Activated CD4-positive, alpha-beta memory T cell treated with anti-CD3 and anti-CD28 coated beads for 36 hours (primary cell): ENCODE measurements at regions of chr17 and their contacts with region 1.

Region 1: DNA sequence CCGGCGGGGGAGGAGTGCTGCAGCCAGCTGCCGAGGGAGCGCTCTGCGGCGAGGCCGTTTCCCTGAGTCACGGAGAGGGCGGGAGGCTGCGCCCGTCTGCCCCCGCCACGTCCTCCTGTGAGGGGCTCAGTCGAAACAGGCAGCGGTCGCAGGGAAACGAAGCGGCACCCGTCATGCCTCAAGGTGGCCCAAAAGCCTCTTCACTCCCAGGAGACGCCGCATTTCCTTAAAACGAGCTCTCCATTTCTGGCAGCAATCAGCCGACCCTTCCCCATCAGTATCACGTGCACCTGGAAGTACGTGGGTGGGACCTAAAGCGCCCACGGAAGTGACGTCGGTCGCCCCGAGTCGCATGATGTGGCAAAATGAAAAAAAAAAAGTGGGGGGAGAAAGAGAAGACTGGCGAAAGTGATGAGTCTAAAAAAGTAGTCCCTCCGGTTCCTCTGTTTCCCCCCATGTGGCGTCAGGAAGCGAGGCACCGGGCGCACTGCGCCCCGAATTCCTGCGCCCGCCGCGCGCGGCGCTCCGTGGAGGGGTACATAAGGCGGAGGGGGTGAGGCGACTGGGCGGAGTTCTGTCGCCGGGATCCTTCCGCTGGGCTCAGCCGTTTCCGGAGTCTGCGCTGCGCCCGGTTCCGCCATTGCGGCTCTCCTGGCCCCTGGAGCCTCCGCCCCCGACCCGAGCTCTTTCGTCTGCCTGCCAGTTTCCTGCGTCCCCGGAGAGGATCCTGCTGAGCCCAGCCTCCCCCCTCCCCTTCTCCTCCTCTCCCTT is at the start of gene CLTC:
- DNase-seq: peak; percentile 96
- H3K4me3 Mint-ChIP-seq: peak within 1 kb of the TSS; percentile 94
- H3K27ac Mint-ChIP-seq: peak within 1 kb of the TSS; percentile 100
- H3K4me1 Mint-ChIP-seq: peaks cover 50% of the 10 kb centered on the region
- H3K27me3 Mint-ChIP-seq: no peaks in the 10 kb centered on the region
- total RNA-seq, gene CLTC: 203 to 206 TPM

Region 2: DNA sequence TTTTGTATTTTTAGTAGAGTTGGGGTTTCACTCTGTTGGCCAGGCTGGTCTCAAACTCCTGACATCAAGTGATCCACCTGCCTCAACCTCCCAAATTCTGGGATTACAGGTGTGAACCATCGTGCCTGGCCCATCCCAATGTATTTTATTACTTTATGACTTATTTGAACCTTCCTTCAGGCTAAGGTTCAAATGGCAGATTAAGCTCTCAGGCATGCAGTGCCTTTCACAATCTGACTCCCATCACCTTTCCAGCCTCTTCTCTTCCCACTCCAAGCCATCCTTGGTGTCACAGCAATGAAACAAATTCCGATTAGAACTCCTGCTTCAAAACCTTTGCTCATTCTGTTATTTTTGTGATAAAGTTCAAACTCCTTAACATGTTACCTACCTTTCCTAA is 314.7 kb before region 1 on chr17:
- CTCF ChIA-PET with region 1: no interaction called
- POLR2A ChIA-PET with region 1: no interaction called
- intact Hi-C with region 1: no loop called
- DNase-seq: no peak
- H3K4me3 Mint-ChIP-seq: no peak overlapping the region
- H3K27ac Mint-ChIP-seq: no peak overlapping the region
- H3K4me1 Mint-ChIP-seq: no peaks in the 10 kb centered on the region
- H3K27me3 Mint-ChIP-seq: peaks cover 1% of the 10 kb centered on the region

Region 3: GRCh38 chr17:59435238-59435637 is 184.2 kb before region 1 on chr17:
- CTCF ChIA-PET with region 1: no interaction called
- POLR2A ChIA-PET with region 1: no interaction called
- intact Hi-C with region 1: loop called (anchors 5 kb)
- DNase-seq: no peak
- H3K4me3 Mint-ChIP-seq: no peak overlapping the region
- H3K27ac Mint-ChIP-seq: peak overlapping the region; percentile 89
- H3K4me1 Mint-ChIP-seq: peaks cover 61% of the 10 kb centered on the region
- H3K27me3 Mint-ChIP-seq: peaks cover 6% of the 10 kb centered on the region

Region 4: GRCh38 chr17:59601130-59601529 is 18.3 kb before region 1 on chr17:
- CTCF ChIA-PET with region 1: interaction called, 3 read pairs
- POLR2A ChIA-PET with region 1: interaction called, 4 read pairs
- intact Hi-C with region 1: loop called (anchors 1 kb)
- DNase-seq: peak; percentile 44
- H3K4me3 Mint-ChIP-seq: no peak overlapping the region
- H3K27ac Mint-ChIP-seq: peak overlapping the region; percentile 77
- H3K4me1 Mint-ChIP-seq: peaks cover 12% of the 10 kb centered on the region
- H3K27me3 Mint-ChIP-seq: no peaks in the 10 kb centered on the region

Region 5: DNA sequence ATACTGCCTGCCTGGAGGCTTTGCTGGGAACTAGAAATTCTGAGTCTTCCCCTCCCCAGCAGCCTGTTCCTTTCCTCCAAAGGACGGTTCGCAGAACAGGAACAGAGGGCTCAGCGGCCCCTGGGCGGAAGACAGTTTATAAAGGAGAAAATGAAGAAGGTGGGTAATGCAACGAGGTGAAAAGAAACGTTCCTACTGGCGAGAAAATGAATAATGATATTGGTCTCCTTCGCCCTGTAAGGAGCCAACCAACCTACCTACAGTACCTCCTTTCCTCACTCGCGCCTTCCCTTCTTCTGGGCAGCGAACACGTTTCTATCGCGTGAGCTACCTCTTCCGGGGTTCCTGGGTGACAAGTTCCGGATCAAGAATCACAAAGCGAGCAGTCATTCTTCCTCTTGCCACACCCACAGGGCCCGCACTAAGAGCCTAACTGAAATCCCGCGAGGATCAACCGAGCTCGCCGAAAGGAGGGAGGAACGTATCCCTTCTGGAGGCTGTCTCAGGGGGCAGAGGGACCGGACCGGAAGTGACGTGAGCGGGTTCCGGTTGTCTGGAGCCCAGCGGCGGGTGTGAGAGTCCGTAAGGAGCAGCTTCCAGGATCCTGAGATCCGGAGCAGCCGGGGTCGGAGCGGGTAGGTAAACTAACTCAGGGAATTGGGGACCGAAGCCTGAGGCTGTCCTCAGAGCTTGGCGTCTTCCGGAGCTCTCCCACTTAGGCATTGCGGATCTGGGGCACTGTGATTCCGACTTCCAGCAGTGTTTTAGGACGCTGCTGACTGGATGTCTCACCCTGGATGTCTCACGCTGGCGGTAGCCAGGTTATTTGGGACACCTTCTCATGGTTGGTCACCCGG is 87.9 kb after region 1 on chr17 and contains the starts of genes PTRH2 and VMP1:
- CTCF ChIA-PET with region 1: no interaction called
- POLR2A ChIA-PET with region 1: interaction called, 12 read pairs
- intact Hi-C with region 1: loop called (anchors 1 kb)
- DNase-seq: peak; percentile 97
- H3K4me3 Mint-ChIP-seq: peak within 1 kb of the TSS; percentile 96
- H3K27ac Mint-ChIP-seq: peak within 1 kb of the TSS; percentile 93
- H3K4me1 Mint-ChIP-seq: peaks cover 58% of the 10 kb centered on the region
- H3K27me3 Mint-ChIP-seq: no peaks in the 10 kb centered on the region
- total RNA-seq, gene PTRH2: 35.9 TPM
- total RNA-seq, gene VMP1: 517 to 553 TPM

Region 6: DNA sequence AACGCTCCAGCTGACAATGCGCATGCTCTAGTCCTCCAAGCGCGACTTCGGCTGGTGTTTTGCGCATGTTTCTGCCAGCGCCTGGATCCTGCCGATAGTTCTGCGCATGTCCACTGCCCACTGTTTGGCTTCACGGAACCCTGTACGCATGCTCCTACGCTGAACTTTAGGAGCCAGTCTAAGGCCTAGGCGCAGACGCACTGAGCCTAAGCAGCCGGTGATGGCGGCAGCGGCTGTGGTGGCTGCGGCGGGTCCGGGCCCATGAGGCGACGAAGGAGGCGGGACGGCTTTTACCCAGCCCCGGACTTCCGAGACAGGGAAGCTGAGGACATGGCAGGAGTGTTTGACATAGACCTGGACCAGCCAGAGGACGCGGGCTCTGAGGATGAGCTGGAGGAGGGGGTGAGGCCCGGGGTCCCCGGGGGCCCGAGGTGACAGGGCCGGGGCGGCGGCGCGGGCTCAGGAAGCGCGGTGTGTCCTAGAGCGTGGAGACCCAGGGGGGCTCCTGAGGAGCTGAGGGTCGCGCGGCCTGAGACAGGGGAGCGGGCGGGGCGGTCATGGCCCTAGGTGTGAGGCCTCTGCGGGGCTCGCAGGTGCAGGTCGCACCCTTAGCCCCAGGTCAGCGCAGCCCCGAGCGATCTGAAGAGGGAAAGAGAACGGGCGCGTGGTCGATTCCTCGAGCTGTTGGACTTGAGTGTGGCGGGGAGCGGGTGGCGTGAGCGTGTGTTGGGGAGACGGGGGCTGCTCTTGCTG is 273.6 kb after region 1 on chr17 and contains the starts of genes RPS6KB1 and TUBD1:
- CTCF ChIA-PET with region 1: no interaction called
- POLR2A ChIA-PET with region 1: no interaction called
- intact Hi-C with region 1: loop called (anchors 5 kb)
- DNase-seq: peak; percentile 99
- H3K4me3 Mint-ChIP-seq: peak within 1 kb of the TSS; percentile 99
- H3K27ac Mint-ChIP-seq: peak within 1 kb of the TSS; percentile 92
- H3K4me1 Mint-ChIP-seq: peaks cover 47% of the 10 kb centered on the region
- H3K27me3 Mint-ChIP-seq: no peaks in the 10 kb centered on the region
- total RNA-seq, gene RPS6KB1: 41.6 to 44.8 TPM
- total RNA-seq, gene TUBD1: 11.0 to 12.7 TPM